GM10248 (cell line): ENCODE measurements at regions of chr1 and their contacts with region 1.

Region 1: GRCh38 chr1:31938174-31938950 is at the start of gene PTP4A2:
- DNase-seq: peak; percentile 95
- CTCF ChIP-seq: peak; percentile 80

Region 2: DNA sequence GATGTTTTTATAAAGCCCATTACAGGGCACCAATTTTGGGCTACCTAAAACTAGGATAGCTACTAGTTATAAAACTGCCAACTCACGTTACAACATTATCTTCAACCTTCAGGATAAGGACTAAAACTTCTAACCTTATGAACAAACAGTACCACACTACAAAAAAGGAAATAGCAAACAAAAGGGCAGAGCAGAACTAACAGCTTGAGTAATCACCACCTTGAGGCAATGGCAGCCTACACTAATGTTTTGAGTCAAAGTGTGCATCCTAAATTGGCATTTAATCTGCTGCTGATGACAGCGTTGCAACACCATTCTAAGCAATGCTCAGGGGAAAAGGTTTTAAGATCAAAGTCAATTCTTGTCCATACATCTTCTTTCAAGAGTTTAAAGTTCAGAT is 27.4 kb before region 1 on chr1:
- CTCF ChIA-PET with region 1: interaction called, 21 read pairs
- POLR2A ChIA-PET with region 1: interaction called, 8 read pairs
- DNase-seq: no peak
- CTCF ChIP-seq: no peak

Region 3: DNA sequence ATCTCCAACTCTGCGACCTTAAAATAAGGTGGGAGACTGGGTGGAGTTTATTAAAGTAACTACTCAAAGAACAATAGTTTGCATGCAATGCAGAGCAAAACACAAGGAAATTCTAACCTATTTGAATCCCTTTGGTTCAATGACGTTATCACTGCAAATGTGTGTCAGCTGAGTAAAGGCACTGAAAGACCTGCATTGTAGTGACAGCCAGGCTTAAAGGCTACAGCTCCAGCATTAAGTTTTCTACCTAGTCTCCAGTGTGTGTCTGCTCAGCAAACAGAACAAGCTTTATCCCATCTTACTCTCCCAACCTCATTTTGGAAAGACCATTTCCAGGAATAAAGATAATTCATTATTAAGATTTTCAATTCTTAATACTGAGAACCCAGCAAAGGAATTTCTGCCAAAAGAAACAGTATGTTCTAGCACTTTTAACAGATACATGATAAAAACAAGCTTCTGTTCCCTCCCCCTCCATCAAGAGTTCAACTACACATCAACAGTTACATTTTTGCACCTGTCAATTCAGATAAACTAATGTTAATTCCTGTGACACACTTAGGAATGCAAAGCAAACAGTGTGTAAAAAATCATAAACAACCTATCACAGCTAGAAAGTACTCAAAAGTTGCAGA is 14.3 kb before region 1 on chr1:
- CTCF ChIA-PET with region 1: interaction called, 30 read pairs
- POLR2A ChIA-PET with region 1: interaction called, 4 read pairs
- DNase-seq: no peak
- CTCF ChIP-seq: no peak